WTC11 (cell line): ENCODE measurements at regions of chr18 and their contacts with region 1.

Region 1: DNA sequence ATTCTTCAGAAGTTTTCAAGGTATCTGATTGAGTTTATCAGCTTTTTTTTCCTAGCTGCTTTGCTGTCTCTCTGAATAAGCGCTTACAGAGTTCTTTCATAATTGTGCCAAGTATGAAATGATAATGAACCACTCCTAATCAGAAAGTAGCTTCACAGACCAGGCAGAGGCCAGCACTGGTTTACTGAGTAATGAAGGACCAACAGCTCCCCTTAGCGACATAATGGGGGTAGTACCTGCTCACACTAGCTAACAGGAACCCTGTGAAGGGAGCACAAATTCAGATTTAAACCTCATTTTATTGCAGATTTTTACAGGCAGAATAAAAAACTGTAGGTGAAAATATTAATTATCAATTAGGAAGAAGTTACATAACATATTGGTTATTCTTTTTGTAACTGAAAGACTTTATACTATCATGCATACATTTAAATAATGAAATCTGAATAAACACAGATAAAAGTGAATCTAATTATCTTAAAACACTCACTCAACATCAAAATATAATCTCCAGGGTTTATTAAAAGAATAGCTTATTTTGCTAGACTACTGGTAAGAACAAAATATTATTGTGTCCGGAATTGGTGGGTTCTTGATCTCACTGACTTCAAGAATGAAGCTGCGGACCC is 53.7 kb upstream of the LRRC30 start:
- DNase-seq: peak; percentile 57
- ATAC-seq: peak; percentile 90
- H3K4me3 Mint-ChIP-seq: no peak overlapping the region
- H3K27ac Mint-ChIP-seq: no peak overlapping the region
- H3K4me1 Mint-ChIP-seq: no peaks in the 10 kb centered on the region
- H3K27me3 Mint-ChIP-seq: no peaks in the 10 kb centered on the region
- CTCF ChIP-seq: peak; percentile 33; the same call in 1 of the 2 replicates

Region 2: GRCh38 chr18:6920099-6920899 is 256.9 kb before region 1 on chr18:
- CTCF ChIA-PET with region 1: interaction called, 76 read pairs
- POLR2A ChIA-PET with region 1: no interaction called
- DNase-seq: peak; percentile 78
- ATAC-seq: peak; percentile 74
- H3K4me3 Mint-ChIP-seq: no peak overlapping the region
- H3K27ac Mint-ChIP-seq: no peak overlapping the region
- H3K4me1 Mint-ChIP-seq: peaks cover 2% of the 10 kb centered on the region
- H3K27me3 Mint-ChIP-seq: no peaks in the 10 kb centered on the region
- CTCF ChIP-seq: peak; percentile 65

Region 3: DNA sequence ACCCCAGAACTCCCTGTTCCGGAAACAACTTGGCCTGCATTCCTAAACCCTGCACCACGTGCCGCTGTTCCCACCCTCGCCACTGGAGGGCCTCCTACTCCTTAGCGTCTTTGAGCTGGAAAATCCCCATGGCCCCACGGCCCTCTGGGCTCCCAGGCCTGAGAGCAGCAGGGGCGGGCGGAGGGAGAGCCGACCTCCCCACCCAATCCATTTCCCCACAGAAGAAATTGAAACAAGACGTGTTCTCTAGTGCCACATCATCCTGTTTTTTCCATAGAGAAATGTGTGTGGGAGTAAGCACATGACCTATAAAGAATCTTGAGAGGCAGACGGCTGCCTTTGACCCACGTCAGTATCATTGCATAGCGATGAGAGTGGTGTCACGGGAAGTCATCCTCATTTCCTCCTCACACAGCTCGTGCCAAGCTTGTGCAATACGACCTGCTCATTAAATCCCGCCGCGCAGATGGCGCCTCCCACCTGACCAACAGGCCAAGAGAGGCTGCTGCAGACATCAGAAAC is 138.8 kb before region 1 on chr18:
- CTCF ChIA-PET with region 1: interaction called, 88 read pairs
- POLR2A ChIA-PET with region 1: no interaction called
- DNase-seq: peak; percentile 90
- ATAC-seq: peak; percentile 98
- H3K4me3 Mint-ChIP-seq: no peak overlapping the region
- H3K27ac Mint-ChIP-seq: peak overlapping the region; percentile 29
- H3K4me1 Mint-ChIP-seq: peaks cover 9% of the 10 kb centered on the region
- H3K27me3 Mint-ChIP-seq: no peaks in the 10 kb centered on the region
- CTCF ChIP-seq: peak; percentile 66

Region 4: DNA sequence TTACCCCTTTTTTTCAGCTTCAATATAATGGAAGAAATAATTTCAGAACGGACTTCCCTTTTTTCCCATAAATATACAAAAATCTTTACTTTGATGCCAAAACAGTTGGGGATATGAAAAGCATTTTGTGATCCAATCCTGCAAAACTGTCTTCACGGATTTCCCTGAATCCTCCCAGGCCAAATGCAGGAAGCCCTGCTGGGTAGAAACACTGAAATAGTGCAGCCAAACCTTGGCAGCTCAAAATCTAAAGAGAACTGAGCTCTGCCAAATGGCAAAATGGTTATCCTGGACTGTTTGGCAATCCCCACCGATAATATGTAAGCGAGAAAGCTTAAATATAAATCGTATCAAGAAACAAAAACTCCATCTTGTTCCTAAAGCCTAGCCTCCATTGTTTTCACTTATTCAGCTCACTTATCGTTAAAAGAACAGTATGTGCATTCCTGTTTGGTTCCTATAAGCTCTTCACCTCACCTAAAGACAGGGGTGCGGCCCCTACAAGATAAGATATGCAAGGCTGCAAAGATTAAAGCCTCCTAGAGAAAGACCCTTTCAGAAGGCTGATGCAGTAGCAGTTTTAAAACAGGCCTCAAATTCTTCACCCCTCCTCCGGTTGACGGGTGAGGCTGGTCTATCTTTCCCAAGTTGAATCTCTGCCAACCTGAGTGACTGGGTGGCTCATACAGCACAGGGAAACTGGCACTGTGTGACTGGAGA is 108.2 kb before region 1 on chr18:
- CTCF ChIA-PET with region 1: interaction called, 10 read pairs
- POLR2A ChIA-PET with region 1: no interaction called
- DNase-seq: no peak
- ATAC-seq: no peak
- H3K4me3 Mint-ChIP-seq: no peak overlapping the region
- H3K27ac Mint-ChIP-seq: no peak overlapping the region
- H3K4me1 Mint-ChIP-seq: peaks cover 17% of the 10 kb centered on the region
- H3K27me3 Mint-ChIP-seq: no peaks in the 10 kb centered on the region
- CTCF ChIP-seq: no peak

Region 5: GRCh38 chr18:7152440-7152839 is 24.8 kb before region 1 on chr18:
- CTCF ChIA-PET with region 1: interaction called, 10 read pairs
- POLR2A ChIA-PET with region 1: no interaction called
- DNase-seq: no peak
- ATAC-seq: no peak
- H3K4me3 Mint-ChIP-seq: no peak overlapping the region
- H3K27ac Mint-ChIP-seq: no peak overlapping the region
- H3K4me1 Mint-ChIP-seq: peaks cover 12% of the 10 kb centered on the region
- H3K27me3 Mint-ChIP-seq: no peaks in the 10 kb centered on the region
- CTCF ChIP-seq: no peak

Region 6: DNA sequence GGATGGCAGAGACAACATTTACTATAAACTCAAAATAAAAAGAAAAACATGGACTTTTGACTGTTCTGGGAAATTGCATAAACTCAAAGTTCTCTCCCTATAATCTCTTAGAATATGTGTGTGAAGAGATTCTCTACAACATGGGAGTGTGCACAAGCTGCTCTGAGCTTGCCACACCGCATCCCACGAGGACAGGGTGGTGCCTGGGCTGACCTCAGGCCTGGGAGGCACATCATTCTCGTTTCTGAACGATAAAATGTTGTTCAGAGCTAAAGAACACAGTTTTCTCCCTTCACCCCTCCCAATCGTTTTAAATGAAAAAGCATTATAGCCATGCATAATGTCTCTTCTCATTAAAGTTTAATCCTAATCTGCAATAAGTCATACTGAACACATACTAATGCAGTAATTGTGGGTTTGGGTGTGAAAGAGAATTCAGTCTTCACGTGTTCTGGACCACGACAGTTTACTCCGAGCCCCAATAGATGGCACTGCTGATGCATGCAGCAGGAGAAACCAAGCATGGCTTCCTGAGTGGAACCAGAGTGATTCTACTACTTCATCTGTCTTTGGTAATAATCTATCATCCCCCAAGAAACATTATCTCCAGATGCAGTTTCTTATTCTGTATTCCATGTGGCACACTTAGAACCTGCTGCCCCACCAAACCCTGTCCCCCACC is 12.8 kb before region 1 on chr18:
- CTCF ChIA-PET with region 1: interaction called, 10 read pairs
- POLR2A ChIA-PET with region 1: no interaction called
- DNase-seq: no peak
- ATAC-seq: peak; percentile 44; the same call in 1 of the 2 replicates
- H3K4me3 Mint-ChIP-seq: no peak overlapping the region
- H3K27ac Mint-ChIP-seq: no peak overlapping the region
- H3K4me1 Mint-ChIP-seq: peaks cover 10% of the 10 kb centered on the region
- H3K27me3 Mint-ChIP-seq: no peaks in the 10 kb centered on the region
- CTCF ChIP-seq: no peak

Region 7: GRCh38 chr18:7190547-7191156 is 13.4 kb after region 1 on chr18:
- CTCF ChIA-PET with region 1: interaction called, 14 read pairs
- POLR2A ChIA-PET with region 1: no interaction called
- DNase-seq: no peak
- ATAC-seq: no peak
- H3K4me3 Mint-ChIP-seq: no peak overlapping the region
- H3K27ac Mint-ChIP-seq: no peak overlapping the region
- H3K4me1 Mint-ChIP-seq: no peaks in the 10 kb centered on the region
- H3K27me3 Mint-ChIP-seq: no peaks in the 10 kb centered on the region
- CTCF ChIP-seq: no peak